ENCODE measurements at regions of chr1 and their contacts with region 1.

Region 1: GRCh38 chr1:109532365-109533136 is 7.1 kb upstream of the GPR61 start:
- DNase-seq: peak; percentile 94
- ATAC-seq: peak; percentile 88
- H3K4me3 Mint-ChIP-seq: peak overlapping the region; percentile 53
- H3K27ac Mint-ChIP-seq: peak overlapping the region; percentile 96
- H3K4me1 Mint-ChIP-seq: peaks cover 36% of the 10 kb centered on the region
- H3K27me3 Mint-ChIP-seq: no peaks in the 10 kb centered on the region

Region 2: GRCh38 chr1:109213785-109214468 is 318.6 kb before region 1 on chr1 and contains the start of gene SARS1:
- CTCF ChIA-PET with region 1: interaction called, 14 read pairs
- POLR2A ChIA-PET with region 1: no interaction called
- DNase-seq: peak; percentile 89
- ATAC-seq: peak; percentile 91
- H3K4me3 Mint-ChIP-seq: peak within 1 kb of the TSS; percentile 99
- H3K27ac Mint-ChIP-seq: peak within 1 kb of the TSS; percentile 85
- H3K4me1 Mint-ChIP-seq: peaks cover 33% of the 10 kb centered on the region
- H3K27me3 Mint-ChIP-seq: peaks cover 3% of the 10 kb centered on the region
- total RNA-seq, gene SARS1: 145 to 157 TPM

Region 3: GRCh38 chr1:109277434-109278204 is 254.9 kb before region 1 on chr1:
- CTCF ChIA-PET with region 1: interaction called, 41 read pairs
- POLR2A ChIA-PET with region 1: no interaction called
- DNase-seq: peak; percentile 79
- ATAC-seq: peak; percentile 79
- H3K4me3 Mint-ChIP-seq: no peak overlapping the region
- H3K27ac Mint-ChIP-seq: peak overlapping the region; percentile 54
- H3K4me1 Mint-ChIP-seq: peaks cover 45% of the 10 kb centered on the region
- H3K27me3 Mint-ChIP-seq: no peaks in the 10 kb centered on the region

Region 4: GRCh38 chr1:109397538-109398342 is 134.8 kb before region 1 on chr1 and contains the start of gene SORT1:
- CTCF ChIA-PET with region 1: interaction called, 74 read pairs
- POLR2A ChIA-PET with region 1: no interaction called
- DNase-seq: peak; percentile 77
- ATAC-seq: peak; percentile 98
- H3K4me3 Mint-ChIP-seq: peak within 1 kb of the TSS; percentile 82
- H3K27ac Mint-ChIP-seq: peak within 1 kb of the TSS; percentile 33
- H3K4me1 Mint-ChIP-seq: peaks cover 41% of the 10 kb centered on the region
- H3K27me3 Mint-ChIP-seq: peaks cover 34% of the 10 kb centered on the region
- total RNA-seq, gene SORT1: 10.8 to 14.0 TPM

Region 5: DNA sequence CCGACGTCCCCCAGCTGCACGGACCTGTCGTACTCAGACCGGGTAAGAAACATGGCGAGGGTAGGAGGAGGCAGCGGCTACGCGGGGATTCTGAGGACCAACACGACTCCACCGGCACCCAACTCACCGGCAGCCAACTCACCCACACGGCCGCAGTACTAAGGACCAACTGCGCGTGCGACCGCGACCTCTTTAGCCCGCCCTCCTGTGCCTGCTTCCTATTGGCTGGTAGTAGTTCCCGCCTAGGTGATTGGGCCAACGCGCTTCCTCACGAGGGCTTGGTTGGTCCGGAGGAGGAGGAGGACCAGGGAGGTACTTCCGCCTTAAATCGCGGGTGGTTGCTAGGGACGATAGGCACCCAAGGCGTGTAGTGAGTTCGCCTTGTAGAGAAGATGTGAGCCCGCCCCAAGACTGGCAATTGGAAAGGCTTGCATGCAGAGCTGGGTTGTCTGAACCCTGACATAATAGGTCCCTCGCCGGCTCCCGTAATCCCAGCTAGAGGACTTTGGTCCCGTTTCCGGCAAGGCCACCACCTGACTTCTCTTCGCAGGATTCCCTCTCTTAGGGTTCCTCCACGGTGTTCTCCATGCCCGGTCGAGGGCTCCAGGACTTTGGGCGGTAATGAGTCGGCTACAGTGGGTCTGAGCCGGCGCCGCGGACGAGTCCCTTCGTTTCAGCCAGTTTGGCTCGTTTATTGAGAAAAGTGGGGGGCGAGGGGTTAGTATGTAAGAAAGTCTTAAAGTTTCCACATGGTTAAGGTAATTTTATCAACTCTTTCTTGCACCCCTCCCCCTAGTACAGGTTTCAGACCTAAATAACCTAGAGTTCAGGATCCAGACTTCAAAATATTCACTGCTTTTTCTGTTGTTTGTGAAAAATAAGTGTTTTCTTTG is 106.0 kb before region 1 on chr1 and contains the start of gene PSMA5:
- CTCF ChIA-PET with region 1: interaction called, 57 read pairs
- POLR2A ChIA-PET with region 1: interaction called, 15 read pairs
- DNase-seq: peak; percentile 98
- ATAC-seq: peak; percentile 94
- H3K4me3 Mint-ChIP-seq: peak within 1 kb of the TSS; percentile 95
- H3K27ac Mint-ChIP-seq: peak within 1 kb of the TSS; percentile 97
- H3K4me1 Mint-ChIP-seq: peaks cover 37% of the 10 kb centered on the region
- H3K27me3 Mint-ChIP-seq: no peaks in the 10 kb centered on the region
- total RNA-seq, gene PSMA5: 174 to 189 TPM

Region 6: GRCh38 chr1:109493805-109494539 is 38.6 kb before region 1 on chr1 and contains the start of gene CYB561D1:
- CTCF ChIA-PET with region 1: interaction called, 1,507 read pairs
- POLR2A ChIA-PET with region 1: interaction called, 66 read pairs
- DNase-seq: peak; percentile 91
- ATAC-seq: peak; percentile 91
- H3K4me3 Mint-ChIP-seq: peak within 1 kb of the TSS; percentile 97
- H3K27ac Mint-ChIP-seq: peak within 1 kb of the TSS; percentile 87
- H3K4me1 Mint-ChIP-seq: peaks cover 56% of the 10 kb centered on the region
- H3K27me3 Mint-ChIP-seq: no peaks in the 10 kb centered on the region
- total RNA-seq, gene CYB561D1: 19.0 to 19.8 TPM

Region 7: GRCh38 chr1:109548321-109549267 is 16.0 kb after region 1 on chr1 and contains the start of gene GNAI3:
- CTCF ChIA-PET with region 1: interaction called, 51 read pairs
- POLR2A ChIA-PET with region 1: interaction called, 14 read pairs
- DNase-seq: peak; percentile 98
- ATAC-seq: peak; percentile 92
- H3K4me3 Mint-ChIP-seq: peak within 1 kb of the TSS; percentile 97
- H3K27ac Mint-ChIP-seq: peak within 1 kb of the TSS; percentile 98
- H3K4me1 Mint-ChIP-seq: peaks cover 44% of the 10 kb centered on the region
- H3K27me3 Mint-ChIP-seq: no peaks in the 10 kb centered on the region
- total RNA-seq, gene GNAI3: 9.6 to 10.2 TPM